MCF 10A (cell line): ENCODE measurements at regions of chr4 and their contacts with region 1.

Region 1: GRCh38 chr4:22356987-22357596 is 158.8 kb downstream of the ADGRA3 start:
- DNase-seq: peak; percentile 28
- H3K4me3 Mint-ChIP-seq: no peak overlapping the region
- H3K27ac Mint-ChIP-seq: no peak overlapping the region
- H3K4me1 Mint-ChIP-seq: no peaks in the 10 kb centered on the region
- H3K27me3 Mint-ChIP-seq: no peaks in the 10 kb centered on the region
- CTCF ChIP-seq: peak; percentile 32

Region 2: DNA sequence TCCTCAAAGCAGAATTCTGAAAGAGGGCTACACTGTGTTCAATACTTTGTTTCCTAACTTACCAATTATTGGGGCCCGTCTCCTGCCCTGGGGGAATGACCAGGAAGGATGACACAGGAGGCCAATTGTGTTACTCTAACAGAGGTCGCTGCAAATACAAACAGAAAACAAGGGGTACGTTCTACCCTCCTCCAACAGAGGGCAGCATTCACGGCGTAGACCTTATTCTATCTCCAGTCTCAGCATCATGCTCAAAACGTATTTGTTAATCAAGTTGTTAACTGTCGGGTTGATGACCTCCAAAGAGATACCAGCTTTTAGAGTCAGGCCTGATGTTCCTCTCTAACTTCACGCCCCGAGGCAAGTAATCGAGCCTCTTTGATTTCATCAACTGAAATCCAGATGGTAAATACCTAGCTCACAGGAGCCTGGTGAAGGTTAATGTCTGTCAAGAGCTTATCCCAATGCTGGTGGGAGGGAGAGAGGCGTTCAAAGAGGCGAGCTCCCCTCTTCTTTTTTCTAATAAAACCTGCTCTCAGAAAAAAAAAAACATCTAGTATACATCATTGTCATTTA is 227.6 kb before region 1 on chr4:
- CTCF ChIA-PET with region 1: interaction called, 7 read pairs
- POLR2A ChIA-PET with region 1: no interaction called
- intact Hi-C with region 1: loop called (anchors 1 kb)
- DNase-seq: peak; percentile 66
- H3K4me3 Mint-ChIP-seq: no peak overlapping the region
- H3K27ac Mint-ChIP-seq: no peak overlapping the region
- H3K4me1 Mint-ChIP-seq: no peaks in the 10 kb centered on the region
- H3K27me3 Mint-ChIP-seq: no peaks in the 10 kb centered on the region
- CTCF ChIP-seq: peak; percentile 54

Region 3: GRCh38 chr4:22268350-22269025 is 88.6 kb before region 1 on chr4:
- CTCF ChIA-PET with region 1: no interaction called
- POLR2A ChIA-PET with region 1: no interaction called
- intact Hi-C with region 1: no loop called
- DNase-seq: peak; percentile 55
- H3K4me3 Mint-ChIP-seq: no peak overlapping the region
- H3K27ac Mint-ChIP-seq: no peak overlapping the region
- H3K4me1 Mint-ChIP-seq: no peaks in the 10 kb centered on the region
- H3K27me3 Mint-ChIP-seq: no peaks in the 10 kb centered on the region
- CTCF ChIP-seq: no peak

Region 4: GRCh38 chr4:22369901-22370562 is 12.9 kb after region 1 on chr4:
- CTCF ChIA-PET with region 1: interaction called, 16 read pairs
- POLR2A ChIA-PET with region 1: no interaction called
- intact Hi-C with region 1: no loop called
- DNase-seq: no peak
- H3K4me3 Mint-ChIP-seq: no peak overlapping the region
- H3K27ac Mint-ChIP-seq: no peak overlapping the region
- H3K4me1 Mint-ChIP-seq: no peaks in the 10 kb centered on the region
- H3K27me3 Mint-ChIP-seq: no peaks in the 10 kb centered on the region
- CTCF ChIP-seq: no peak

Region 5: GRCh38 chr4:22552812-22553211 is 195.7 kb after region 1 on chr4:
- CTCF ChIA-PET with region 1: no interaction called
- POLR2A ChIA-PET with region 1: no interaction called
- intact Hi-C with region 1: no loop called
- DNase-seq: no peak
- H3K4me3 Mint-ChIP-seq: no peak overlapping the region
- H3K27ac Mint-ChIP-seq: no peak overlapping the region
- H3K4me1 Mint-ChIP-seq: no peaks in the 10 kb centered on the region
- H3K27me3 Mint-ChIP-seq: no peaks in the 10 kb centered on the region
- CTCF ChIP-seq: no peak